ENCODE measurements at regions of chrX and their contacts with region 1.

Region 1: DNA sequence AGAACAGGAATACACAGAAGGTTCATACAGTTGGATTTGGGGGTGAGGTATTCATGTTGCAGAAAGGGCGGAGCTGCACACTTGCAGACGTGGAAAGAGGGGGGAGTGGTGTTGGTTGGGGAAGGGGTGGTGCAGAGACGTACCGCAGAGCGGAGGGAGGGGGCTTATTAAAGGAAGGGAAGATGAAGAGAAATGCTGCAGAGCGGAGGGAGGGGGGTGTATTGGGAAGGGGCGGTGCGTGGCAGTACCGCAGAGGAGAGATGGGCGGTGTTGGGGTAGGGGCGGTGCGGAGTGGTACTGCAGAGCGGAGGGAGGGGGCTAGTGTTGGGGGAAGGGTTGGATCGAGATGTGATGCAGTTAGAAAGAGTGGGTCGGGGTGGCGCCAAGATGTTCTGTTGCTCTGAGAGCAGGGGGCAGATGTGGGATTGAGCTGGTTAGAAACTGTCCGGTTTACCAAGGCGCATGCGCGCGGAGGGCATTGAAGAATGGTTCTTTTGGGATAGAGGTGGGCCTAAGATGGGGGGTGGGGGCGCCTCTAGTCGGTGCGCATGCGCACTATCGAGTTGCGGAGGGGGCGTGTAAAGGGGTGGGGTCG is 900 bp downstream of the TRO start:
- DNase-seq: peak; percentile 82
- H3K4me3 Mint-ChIP-seq: peak overlapping the region; percentile 94
- H3K27ac Mint-ChIP-seq: peak overlapping the region; percentile 58
- H3K4me1 Mint-ChIP-seq: peaks cover 17% of the 10 kb centered on the region
- H3K27me3 Mint-ChIP-seq: peaks cover 10% of the 10 kb centered on the region

Region 2: GRCh38 chrX:54786962-54787361 is 134.6 kb before region 1 on chrX:
- intact Hi-C with region 1: no loop called
- DNase-seq: peak; percentile 75
- H3K4me3 Mint-ChIP-seq: no peak overlapping the region
- H3K27ac Mint-ChIP-seq: no peak overlapping the region
- H3K4me1 Mint-ChIP-seq: no peaks in the 10 kb centered on the region
- H3K27me3 Mint-ChIP-seq: peaks cover 2% of the 10 kb centered on the region

Region 3: DNA sequence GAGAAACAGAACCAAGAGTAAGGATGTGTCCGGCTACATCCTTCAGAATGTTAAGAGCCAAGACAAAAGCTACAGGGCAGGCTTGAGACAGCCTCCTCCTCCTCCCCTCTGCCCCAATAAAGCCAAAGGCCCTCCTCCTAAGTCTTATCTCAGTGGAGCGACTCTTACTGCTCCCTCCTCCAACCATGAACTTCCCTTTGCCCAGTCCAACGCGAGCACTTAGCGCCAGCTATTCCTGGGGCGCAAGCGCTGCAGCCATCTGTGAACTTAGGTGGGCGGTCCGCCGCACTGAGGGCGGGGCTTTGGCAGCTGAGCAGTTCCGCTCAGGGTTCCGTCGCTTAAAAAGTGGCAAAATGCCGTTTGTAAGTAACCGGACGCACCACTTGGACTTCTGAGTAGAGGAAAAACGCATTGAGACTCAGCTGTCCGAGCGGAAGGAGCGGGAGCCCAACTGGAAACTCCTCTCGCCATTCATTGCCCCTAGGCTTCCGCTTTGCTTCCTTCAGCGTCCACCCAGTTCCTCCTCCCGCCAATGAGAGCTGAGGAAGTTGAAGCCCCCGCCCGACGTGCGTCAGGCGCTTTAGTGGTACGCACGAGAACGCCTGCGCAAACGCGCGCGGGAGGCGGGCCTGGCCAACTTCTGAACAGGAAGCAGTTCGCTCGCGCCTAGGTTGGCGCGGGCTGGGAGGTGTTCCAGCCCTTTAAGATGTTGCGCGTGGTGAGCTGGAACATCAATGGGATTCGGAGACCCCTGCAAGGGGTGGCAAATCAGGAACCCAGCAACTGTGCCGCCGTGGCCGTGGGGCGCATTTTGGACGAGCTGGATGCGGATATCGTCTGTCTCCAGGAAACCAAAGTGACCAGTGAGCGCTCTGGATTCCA is 78.4 kb after region 1 on chrX and contains the start of gene APEX2:
- intact Hi-C with region 1: loop called (anchors 10 kb)
- DNase-seq: peak; percentile 96
- H3K4me3 Mint-ChIP-seq: peak within 1 kb of the TSS; percentile 97
- H3K27ac Mint-ChIP-seq: peak within 1 kb of the TSS; percentile 87
- H3K4me1 Mint-ChIP-seq: peaks cover 14% of the 10 kb centered on the region
- H3K27me3 Mint-ChIP-seq: no peaks in the 10 kb centered on the region
- total RNA-seq, gene APEX2: 32.2 and 36.1 TPM in 2 replicates

Measured in activated CD4-positive, alpha-beta T cell treated with anti-CD3 and anti-CD28 coated beads, Interleukin-2, amount 10 ng/mL, durations not matched to agents 24 days and 14 days (primary cell).